H1 (cell line): ENCODE measurements at regions of chr15 and their contacts with region 1.

Region 1: GRCh38 chr15:90818251-90819210 is 49.9 kb upstream of the FURIN start:
- DNase-seq: peak in 1 of 2 experiments; percentile 53
- H3K4me3 ChIP-seq: no peak overlapping the region
- H3K27ac ChIP-seq: no peak overlapping the region
- H3K4me1 ChIP-seq: peaks cover 9 to 20% (median 17%) of the 10 kb centered on the region in 4 experiments
- H3K27me3 ChIP-seq: no peaks in the 10 kb centered on the region
- CTCF ChIP-seq: peak; percentile 59 to 65 (median 63)
- EP300 ChIP-seq: no peak
- POLR2A ChIP-seq: no peak
- RAD21 ChIP-seq: peak; percentile 59 to 73

Region 2: DNA sequence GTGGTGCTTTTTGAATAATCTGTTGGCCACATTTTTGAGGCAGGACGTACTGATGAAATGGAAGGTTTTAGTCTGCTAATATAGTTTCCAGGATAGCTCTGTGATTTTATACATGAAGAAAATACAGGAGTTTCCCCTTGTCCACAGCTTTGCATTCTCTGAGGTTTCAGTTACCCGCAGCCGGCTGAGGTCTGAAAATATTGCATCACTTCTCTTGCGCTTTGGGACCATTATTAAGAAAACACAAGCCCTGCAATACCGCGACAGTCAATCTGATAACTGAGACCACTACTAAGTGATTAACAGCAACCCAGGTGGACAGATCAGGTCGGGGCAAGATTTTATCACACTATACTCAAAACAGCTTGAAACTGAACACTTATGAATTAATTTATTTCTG is 68.3 kb before region 1 on chr15:
- CTCF ChIA-PET with region 1: no interaction called
- POLR2A ChIA-PET with region 1: no interaction called
- DNase-seq: no peak
- H3K4me3 ChIP-seq: no peak overlapping the region
- H3K27ac ChIP-seq: no peak overlapping the region
- H3K4me1 ChIP-seq: no peaks in the 10 kb centered on the region
- H3K27me3 ChIP-seq: no peaks in the 10 kb centered on the region
- CTCF ChIP-seq: no peak
- EP300 ChIP-seq: no peak
- POLR2A ChIP-seq: no peak
- RAD21 ChIP-seq: no peak

Region 3: DNA sequence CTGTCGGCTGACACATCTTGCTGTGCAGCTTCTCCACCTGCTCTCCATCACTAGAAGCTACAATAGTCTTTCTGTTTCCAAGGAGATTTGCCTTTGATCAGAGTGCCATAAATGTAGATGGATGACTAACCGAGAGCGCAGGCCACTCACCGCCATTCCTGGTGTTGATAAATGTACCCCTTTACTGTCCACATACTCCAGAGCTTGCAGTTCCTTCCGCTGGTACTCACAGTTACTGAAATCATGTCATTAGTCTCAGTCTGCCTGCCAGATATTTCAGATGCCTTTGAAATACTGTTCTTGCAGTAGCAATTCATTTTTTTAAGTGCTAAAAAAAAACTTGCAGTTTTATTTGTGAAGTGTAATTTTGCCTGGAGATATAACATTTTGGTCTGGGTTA is 29.1 kb before region 1 on chr15:
- CTCF ChIA-PET with region 1: no interaction called
- POLR2A ChIA-PET with region 1: no interaction called
- DNase-seq: no peak
- H3K4me3 ChIP-seq: no peak overlapping the region
- H3K27ac ChIP-seq: no peak overlapping the region
- H3K4me1 ChIP-seq: no peaks in the 10 kb centered on the region
- H3K27me3 ChIP-seq: no peaks in the 10 kb centered on the region
- CTCF ChIP-seq: no peak
- EP300 ChIP-seq: no peak
- POLR2A ChIP-seq: no peak
- RAD21 ChIP-seq: no peak

Region 4: GRCh38 chr15:90829942-90830440 is 11.5 kb after region 1 on chr15:
- CTCF ChIA-PET with region 1: interaction called, 15 read pairs
- POLR2A ChIA-PET with region 1: interaction called, 3 read pairs
- DNase-seq: no peak
- H3K4me3 ChIP-seq: no peak overlapping the region
- H3K27ac ChIP-seq: no peak overlapping the region
- H3K4me1 ChIP-seq: no peaks in the 10 kb centered on the region; a peak in 1 of 7 replicates
- H3K27me3 ChIP-seq: no peaks in the 10 kb centered on the region; a peak in 1 of 7 replicates
- CTCF ChIP-seq: no peak
- EP300 ChIP-seq: no peak
- POLR2A ChIP-seq: no peak
- RAD21 ChIP-seq: no peak